ENCODE measurements at regions of chr5 and their contacts with region 1.

Region 1: DNA sequence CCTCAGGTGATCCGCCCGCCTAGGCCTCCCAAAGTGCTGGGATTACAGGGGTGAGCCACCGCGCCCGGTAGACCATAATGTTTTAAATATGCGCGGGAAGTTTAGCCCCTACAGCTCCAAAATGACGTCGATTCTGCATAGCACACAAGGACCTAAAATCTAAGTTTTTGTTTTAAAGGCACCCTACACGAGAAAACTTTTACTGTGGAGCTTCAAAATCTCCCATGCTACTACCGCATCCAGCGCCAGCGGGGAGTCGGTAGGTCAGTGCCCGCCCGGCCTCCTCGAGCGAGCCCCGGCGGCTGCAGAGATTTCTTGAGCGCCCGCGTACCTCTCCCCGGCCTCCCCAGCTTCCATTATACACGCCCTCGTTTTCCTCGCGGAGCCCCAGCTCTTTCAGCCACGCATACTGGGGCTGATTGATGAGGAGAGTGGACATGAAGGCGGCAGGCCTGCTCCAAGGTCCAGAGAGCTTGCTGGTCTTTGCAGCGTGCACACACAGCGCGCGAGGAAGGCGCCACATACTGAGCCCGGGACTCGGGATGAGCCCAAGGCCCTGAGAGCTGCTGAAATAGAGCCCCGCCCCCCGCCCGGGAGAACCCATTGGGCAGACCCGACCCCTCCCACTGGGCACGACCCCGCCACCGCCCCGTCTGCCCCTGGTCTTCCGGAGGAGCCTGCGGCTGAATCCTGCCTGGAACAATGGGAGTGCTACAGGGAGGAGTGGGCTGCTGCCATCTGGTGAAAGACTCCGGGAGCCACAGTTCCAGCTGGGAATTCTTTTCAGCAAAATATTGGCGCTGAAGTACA is at the start of gene ALDH7A1:
- DNase-seq: peak; percentile 93
- total RNA-seq, gene ALDH7A1: 26.4 TPM

Region 2: GRCh38 chr5:126339215-126339805 is 255.6 kb before region 1 on chr5:
- intact Hi-C with region 1: loop called (anchors 2 kb)
- DNase-seq: no peak

Region 3: DNA sequence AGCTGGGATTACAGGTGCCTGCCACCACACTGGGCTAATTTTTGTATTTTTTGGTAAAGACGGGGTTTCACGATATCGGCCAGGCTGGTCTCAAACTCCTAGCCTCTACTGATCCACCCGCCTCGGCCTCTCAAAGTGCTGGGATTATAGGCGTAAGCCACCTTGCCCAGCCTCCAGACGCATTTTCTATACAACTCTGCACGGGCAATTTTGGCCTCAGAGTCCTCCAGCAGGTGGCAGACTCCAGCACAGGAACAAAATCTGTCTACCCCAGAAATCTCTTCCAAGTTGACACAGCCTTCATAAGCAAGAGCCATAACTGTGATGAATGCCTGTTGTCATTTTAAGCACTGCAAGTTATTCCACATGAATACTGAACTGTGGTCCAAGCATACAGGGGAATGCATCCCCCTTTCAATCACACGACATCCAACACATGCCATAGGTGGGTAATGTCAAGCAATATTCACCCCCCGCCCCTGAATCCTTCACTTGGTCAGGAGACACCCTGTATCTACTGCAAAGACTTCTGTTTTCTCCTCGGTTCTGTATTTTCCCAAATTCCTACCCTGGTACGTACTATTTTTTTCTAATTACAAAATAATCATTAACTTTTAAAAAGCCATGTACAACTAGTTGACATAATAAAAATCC is 50.7 kb before region 1 on chr5:
- intact Hi-C with region 1: loop called (anchors 5 kb)
- DNase-seq: no peak

Region 4: DNA sequence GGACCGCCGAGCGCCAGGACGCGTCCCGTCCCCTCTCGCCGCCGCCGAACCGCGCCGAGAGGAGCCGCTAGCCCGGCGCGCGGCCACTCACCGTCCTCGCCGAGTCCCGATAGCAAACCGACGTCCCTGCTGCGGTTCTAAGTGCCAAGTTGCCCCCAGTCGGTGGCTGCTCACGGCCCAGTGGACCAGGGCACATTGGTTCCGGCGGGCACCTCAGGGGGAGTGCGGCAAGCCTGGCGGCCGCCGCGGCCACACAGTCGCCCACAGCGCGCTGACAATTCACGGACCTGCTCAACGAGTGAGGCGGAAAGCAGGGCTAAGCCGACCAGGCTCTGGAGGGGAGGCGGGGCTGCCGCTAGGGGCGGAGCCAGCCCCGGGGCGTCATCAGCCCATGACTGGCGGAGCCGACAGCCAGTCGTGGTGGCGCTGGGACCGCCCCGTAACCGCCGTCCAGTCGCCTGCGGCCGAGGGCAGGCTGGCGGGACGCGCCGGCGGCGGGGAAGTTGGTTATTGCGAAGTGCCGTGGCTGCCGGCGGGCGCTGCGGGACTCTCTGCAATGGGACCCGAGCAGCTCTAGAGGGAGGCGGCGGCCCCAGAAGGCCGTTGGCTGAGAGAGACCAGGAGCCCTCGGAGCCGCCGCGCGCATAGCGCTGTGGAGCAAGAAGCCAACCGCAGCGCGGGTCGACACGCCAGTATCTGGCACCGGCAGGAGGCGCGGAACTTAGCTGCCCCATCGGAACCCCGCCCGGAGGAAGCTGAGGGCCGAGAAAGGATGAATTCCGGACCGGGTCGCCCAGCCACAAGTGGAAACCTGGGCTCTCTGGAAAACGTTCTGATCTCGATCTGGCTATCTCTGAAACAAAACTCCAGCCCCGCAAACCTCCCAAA is 435.6 kb after region 1 on chr5 and contains the start of gene MARCHF3:
- intact Hi-C with region 1: no loop called
- DNase-seq: peak; percentile 99
- total RNA-seq, gene MARCHF3: 61.0 TPM